CD4-positive, alpha-beta T cell (primary cell): ENCODE measurements at regions of chr1 and their contacts with region 1.

Region 1: DNA sequence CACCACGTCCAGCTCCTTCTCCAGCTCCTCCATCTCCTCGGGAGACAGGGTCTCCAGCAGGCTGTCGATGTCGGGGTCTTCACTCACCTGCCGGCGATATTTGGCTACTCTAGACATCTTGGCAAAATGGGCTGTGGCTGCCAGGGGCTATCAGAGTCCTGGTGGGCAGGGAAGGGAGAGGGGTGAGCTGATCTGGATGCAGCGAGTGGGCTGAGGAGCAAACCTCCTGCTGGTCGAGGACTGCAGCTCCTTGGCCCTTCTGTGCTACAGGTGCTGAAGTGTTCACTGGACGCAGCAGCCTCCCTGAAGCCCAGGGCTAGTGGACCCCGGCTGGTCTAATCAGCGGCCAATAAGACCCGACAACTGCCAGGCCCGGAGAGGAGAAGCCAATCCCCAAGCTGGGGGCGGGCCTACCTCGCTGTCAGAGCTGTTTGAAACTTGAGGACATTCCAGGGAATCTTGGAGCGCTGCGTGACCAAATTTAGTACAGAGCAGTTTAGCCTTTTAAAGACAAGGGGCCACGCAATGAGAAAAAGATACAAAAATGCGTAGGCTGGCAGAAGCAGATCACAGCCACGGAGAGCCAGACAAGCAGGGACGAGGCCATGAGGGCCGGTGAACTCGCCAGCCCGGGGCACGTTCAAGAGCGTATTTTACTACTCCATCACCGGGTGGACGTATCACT is at the start of gene LMOD1:
- DNase-seq: peak in 2 of 14 experiments; percentile 6 to 13
- ATAC-seq: no peak
- H3K4me3 ChIP-seq: peak within 1 kb of the TSS; percentile 12
- H3K4me3 Mint-ChIP-seq: peak within 1 kb of the TSS; percentile 8
- H3K27ac ChIP-seq: no peak within 1 kb of the TSS
- H3K27ac Mint-ChIP-seq: no peak within 1 kb of the TSS
- H3K4me1 ChIP-seq: peaks cover 8% of the 10 kb centered on the region
- H3K4me1 Mint-ChIP-seq: peaks cover 19% of the 10 kb centered on the region
- H3K27me3 ChIP-seq: peaks cover 36 to 41% of the 10 kb centered on the region in 2 experiments
- H3K27me3 Mint-ChIP-seq: peaks cover 66% of the 10 kb centered on the region
- CTCF ChIP-seq: no peak
- total RNA-seq, gene LMOD1: not detected

Region 2: DNA sequence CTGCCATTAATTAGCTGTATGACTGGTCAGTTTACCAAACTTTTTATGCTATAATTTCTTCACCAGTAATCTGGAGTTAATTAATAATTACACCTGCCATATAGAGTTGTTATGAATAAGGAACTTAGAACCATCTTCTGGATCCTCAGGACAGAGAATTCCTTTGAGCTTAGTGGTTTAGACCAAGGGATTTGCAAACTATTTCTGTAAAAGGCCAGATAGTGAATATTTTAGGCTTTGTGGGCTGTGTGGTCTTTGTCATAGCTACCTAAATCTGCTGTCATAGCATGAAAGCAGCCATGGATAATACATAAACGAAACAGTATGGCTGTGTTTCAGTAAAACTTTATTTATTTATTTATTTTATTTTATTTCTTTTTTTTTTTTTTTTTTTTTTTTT is 17.9 kb after region 1 on chr1:
- CTCF ChIA-PET with region 1: no interaction called
- POLR2A ChIA-PET with region 1: no interaction called
- intact Hi-C with region 1: loop called in 1 of 2 experiments (anchors 1 kb)
- DNase-seq: no peak
- ATAC-seq: no peak
- H3K4me3 ChIP-seq: no peak overlapping the region
- H3K4me3 Mint-ChIP-seq: no peak overlapping the region
- H3K27ac ChIP-seq: no peak overlapping the region
- H3K27ac Mint-ChIP-seq: no peak overlapping the region
- H3K4me1 ChIP-seq: no peaks in the 10 kb centered on the region
- H3K4me1 Mint-ChIP-seq: no peaks in the 10 kb centered on the region
- H3K27me3 ChIP-seq: no peaks in the 10 kb centered on the region
- H3K27me3 Mint-ChIP-seq: no peaks in the 10 kb centered on the region
- CTCF ChIP-seq: no peak

Region 3: GRCh38 chr1:201990427-201990826 is 44.1 kb after region 1 on chr1:
- CTCF ChIA-PET with region 1: no interaction called
- POLR2A ChIA-PET with region 1: no interaction called
- intact Hi-C with region 1: loop called in 1 of 2 experiments (anchors 5 kb)
- DNase-seq: no peak
- ATAC-seq: no peak
- H3K4me3 ChIP-seq: no peak overlapping the region
- H3K4me3 Mint-ChIP-seq: no peak overlapping the region
- H3K27ac ChIP-seq: no peak overlapping the region
- H3K27ac Mint-ChIP-seq: no peak overlapping the region
- H3K4me1 ChIP-seq: no peaks in the 10 kb centered on the region
- H3K4me1 Mint-ChIP-seq: no peaks in the 10 kb centered on the region
- H3K27me3 ChIP-seq: no peaks in the 10 kb centered on the region
- H3K27me3 Mint-ChIP-seq: no peaks in the 10 kb centered on the region
- CTCF ChIP-seq: no peak